ENCODE measurements at regions of chr16 and their contacts with region 1.

Region 1: DNA sequence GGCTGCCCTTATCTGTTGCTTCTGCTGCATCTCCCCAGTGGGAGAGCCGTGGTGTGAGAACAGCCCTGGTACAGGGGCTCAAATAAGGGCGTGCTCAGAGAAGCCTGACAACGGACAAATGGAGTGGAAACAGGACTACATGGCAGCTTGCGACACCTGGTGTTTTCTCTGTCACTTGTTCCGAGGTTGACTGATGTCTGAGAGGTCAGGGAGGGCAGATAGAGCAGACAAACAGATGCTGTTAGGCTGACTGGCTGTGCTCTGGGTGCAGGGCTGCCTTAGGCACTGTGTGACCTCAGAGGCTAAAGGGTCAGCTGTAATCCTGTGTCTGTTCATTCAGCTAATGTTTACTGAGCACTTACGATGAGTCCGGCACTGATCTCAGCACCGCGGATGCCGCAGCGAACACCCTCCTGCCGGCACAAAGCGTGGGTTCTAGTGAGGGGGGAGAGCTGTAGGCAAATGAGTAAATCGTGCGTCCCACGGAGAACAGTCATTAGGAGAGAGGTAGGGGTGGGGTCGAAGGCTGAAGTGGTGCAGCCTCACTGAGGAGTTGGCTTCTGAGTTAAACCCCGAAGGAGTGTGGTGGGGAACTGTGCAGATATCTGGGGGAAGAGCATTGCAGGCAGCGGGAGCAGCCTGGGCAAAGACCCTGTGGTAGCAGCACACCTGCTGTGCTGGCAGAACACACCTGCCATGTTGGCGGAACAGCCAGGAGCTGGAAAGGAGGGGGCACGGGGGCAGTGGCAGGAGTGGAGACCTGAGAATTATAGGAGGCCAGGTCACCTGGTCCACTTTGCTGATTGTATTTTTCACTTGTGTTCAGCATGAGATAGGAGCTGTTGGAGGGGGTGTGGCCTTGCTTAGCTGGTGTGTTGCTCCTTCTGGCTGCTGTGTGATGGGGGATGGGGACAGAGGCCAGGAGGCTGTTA is 35.0 kb downstream of the GPT2 start:
- DNase-seq: peak; percentile 86
- CTCF ChIP-seq: peak; percentile 30

Region 2: GRCh38 chr16:46673320-46674013 is 245.7 kb before region 1 on chr16:
- in situ Hi-C with region 1: loop called (anchors 5 kb)
- DNase-seq: peak; percentile 56
- CTCF ChIP-seq: peak; percentile 91

Region 3: GRCh38 chr16:46844771-46845170 is 74.4 kb before region 1 on chr16:
- in situ Hi-C with region 1: loop called (anchors 5 kb)
- DNase-seq: no peak
- CTCF ChIP-seq: no peak

Region 4: DNA sequence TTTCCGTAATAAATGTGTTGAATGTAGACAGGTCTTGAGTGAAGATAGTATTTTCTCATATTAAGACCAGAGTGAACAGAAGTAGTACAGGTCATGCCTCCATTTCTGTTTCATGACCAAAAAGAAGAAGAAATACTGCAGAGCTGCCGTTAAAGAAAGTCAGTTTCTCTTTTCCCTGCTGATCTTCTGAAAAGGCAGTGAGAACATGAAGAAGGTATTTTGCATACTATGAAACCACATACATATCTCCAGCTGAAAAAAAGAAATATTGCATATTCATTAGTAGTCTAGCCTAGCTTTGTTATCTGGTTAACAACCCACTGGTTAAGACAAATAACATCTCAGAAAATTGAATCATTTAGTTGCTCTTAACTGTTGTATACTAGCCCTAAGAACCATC is 680.4 kb after region 1 on chr16:
- in situ Hi-C with region 1: no loop called
- DNase-seq: peak; percentile 27
- CTCF ChIP-seq: no peak